Ovary (tissue), 10 donors: ENCODE measurements at regions of chr1 and their contacts with region 1.

Region 1: GRCh38 chr1:168689726-168690602 is 39.0 kb downstream of the DPT start:
- DNase-seq: no peak
- H3K4me3 ChIP-seq: no peak overlapping the region
- H3K27ac ChIP-seq: no peak overlapping the region
- H3K4me1 ChIP-seq: peaks cover 6% of the 10 kb centered on the region
- H3K27me3 ChIP-seq: no peaks in the 10 kb centered on the region
- CTCF ChIP-seq: no peak
- EP300 ChIP-seq: no peak
- POLR2A ChIP-seq: no peak

Region 2: GRCh38 chr1:168491527-168492164 is 198.3 kb before region 1 on chr1:
- intact Hi-C with region 1: loop called in 1 of 4 experiments (anchors 5 kb)
- DNase-seq: no peak
- H3K4me3 ChIP-seq: no peak overlapping the region
- H3K27ac ChIP-seq: no peak overlapping the region
- H3K4me1 ChIP-seq: no peaks in the 10 kb centered on the region
- H3K27me3 ChIP-seq: no peaks in the 10 kb centered on the region
- CTCF ChIP-seq: no peak
- EP300 ChIP-seq: no peak
- POLR2A ChIP-seq: no peak